Naive thymus-derived CD8-positive, alpha-beta T cell (primary cell): ENCODE measurements at regions of chr18 and their contacts with region 1.

Region 1: DNA sequence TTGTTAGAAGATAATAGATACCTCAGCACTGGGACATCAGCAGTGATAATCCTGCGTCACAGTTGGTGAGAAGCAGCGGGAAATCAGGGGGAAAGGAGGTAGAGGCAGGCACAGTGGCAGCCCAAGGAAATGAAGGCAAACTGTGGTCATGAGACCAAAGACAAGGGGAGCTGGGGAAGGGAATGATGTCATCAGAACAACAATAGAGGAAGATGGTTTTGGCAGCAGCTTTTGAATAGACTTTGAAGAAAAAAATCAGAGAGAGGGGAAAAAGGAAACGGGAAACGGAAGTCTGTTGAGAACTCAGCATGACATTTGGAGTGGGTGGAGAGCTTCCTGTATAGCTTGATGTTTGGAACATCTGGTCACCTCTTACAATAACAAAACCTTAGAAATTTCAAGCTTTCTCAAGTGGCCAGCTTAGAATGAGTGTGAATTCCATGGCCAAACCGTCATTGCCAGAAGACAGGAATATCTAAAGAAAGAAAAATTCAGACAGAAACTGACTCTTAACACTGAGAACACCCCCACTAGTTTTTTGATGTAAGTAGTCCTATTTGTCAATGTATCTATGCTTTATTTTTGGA is 18.4 kb upstream of the YES1 start:
- DNase-seq: peak in 8 of 10 donors; percentile 48 to 84 (median 68)
- ATAC-seq: peak; percentile 89
- H3K4me3 Mint-ChIP-seq: peak overlapping the region; percentile 5 to 79 (median 64)
- H3K27ac Mint-ChIP-seq: peak overlapping the region; percentile 24 to 94 (median 86)
- H3K4me1 Mint-ChIP-seq: peaks cover 14 to 34% (median 26%) of the 10 kb centered on the region in 4 donors
- H3K27me3 Mint-ChIP-seq: peaks cover 0 to 12% (median 0%) of the 10 kb centered on the region in 5 donors

Region 2: DNA sequence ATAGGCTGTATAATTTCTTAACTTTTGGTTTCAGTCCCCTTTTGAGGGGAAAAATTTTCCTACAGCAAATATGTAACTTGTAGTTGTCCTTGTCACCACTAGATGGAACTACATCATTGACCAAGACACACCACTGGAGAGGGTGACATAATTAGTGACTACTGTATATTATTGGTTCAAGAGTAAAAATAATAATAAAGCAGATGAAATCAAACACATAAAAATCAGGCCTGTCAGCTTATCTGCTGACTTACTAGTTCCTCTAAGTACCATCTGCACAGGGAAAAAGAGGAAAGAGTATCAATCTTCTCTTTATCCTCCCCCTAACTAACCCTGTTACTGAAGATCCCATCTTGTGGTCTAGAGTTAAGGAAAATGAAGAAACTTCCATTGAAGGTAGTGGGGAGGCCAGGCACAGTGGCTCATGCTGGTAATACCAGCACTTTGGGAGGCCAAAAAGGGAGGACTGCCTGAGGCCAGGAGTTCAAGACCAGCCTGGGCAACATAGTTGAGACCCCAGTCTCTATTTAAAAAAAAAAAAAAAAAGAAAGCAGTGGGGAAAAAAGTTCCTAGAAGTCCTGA is 88.4 kb before region 1 on chr18:
- POLR2A ChIA-PET with region 1: interaction called, 11 read pairs
- DNase-seq: peak in 5 of 10 donors; percentile 4 to 61 (median 51)
- ATAC-seq: peak; percentile 67 to 73
- H3K4me3 Mint-ChIP-seq: no peak overlapping the region
- H3K27ac Mint-ChIP-seq: peak overlapping the region in 2 of 10 donors; percentile 64 to 75
- H3K4me1 Mint-ChIP-seq: peaks cover 0 to 2% (median 1%) of the 10 kb centered on the region in 4 donors
- H3K27me3 Mint-ChIP-seq: no peaks in the 10 kb centered on the region